ENCODE measurements at regions of chr9 and their contacts with region 1.

Region 1: GRCh38 chr9:14466429-14466818 is 152.5 kb upstream of the NFIB start:
- DNase-seq: no peak
- H3K4me3 ChIP-seq: no peak overlapping the region
- H3K27ac ChIP-seq: no peak overlapping the region
- H3K4me1 ChIP-seq: peaks cover 10% of the 10 kb centered on the region
- H3K27me3 ChIP-seq: no peaks in the 10 kb centered on the region
- CTCF ChIP-seq: no peak
- POLR2A ChIP-seq: no peak

Region 2: DNA sequence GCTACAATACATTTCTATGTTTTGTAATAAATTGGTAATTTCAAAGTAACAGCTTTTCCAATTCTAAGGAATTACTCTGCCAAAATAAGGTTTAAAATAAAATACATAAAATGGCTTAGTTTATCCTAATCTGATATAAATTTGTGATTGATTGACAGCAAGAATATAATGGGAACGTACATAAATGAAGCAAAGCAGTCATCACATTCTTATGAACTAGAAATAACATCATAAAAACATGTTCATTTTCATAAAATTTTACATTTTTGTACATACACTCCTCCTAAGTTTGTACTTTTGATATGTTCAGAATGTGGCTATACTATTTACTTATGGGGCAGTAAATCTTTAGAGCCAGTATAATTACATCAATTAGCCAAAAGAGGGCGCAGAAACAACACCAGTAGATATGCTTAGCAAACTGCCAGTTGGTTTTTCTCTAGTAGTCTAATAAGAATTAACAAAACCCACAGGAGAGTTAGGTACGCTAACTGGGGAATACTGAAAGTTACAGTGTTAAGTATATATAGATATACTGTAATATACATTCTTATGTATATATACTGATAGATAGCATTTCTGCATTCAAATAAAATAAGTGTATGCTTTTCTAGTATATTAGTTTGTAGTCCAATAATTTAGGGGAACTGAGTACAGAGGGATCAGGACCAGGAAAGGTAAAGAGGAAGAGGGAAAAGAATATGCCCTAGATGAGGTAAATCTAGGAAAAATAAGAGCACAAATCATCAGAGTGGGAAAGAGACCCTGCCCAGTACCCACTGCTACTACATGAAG is 150.0 kb after region 1 on chr9:
- CTCF ChIA-PET with region 1: interaction called, 12 read pairs
- POLR2A ChIA-PET with region 1: no interaction called
- dilution Hi-C with region 1: no loop called
- intact Hi-C with region 1: loop called (anchors 1 kb)
- DNase-seq: peak; percentile 68
- H3K4me3 ChIP-seq: no peak overlapping the region
- H3K27ac ChIP-seq: no peak overlapping the region
- H3K4me1 ChIP-seq: no peaks in the 10 kb centered on the region
- H3K27me3 ChIP-seq: no peaks in the 10 kb centered on the region
- CTCF ChIP-seq: peak; percentile 37 to 46
- POLR2A ChIP-seq: no peak

Region 3: GRCh38 chr9:14661421-14662059 is 195.1 kb after region 1 on chr9:
- CTCF ChIA-PET with region 1: interaction called, 37 read pairs
- POLR2A ChIA-PET with region 1: no interaction called
- dilution Hi-C with region 1: no loop called
- intact Hi-C with region 1: no loop called
- DNase-seq: peak; percentile 73
- H3K4me3 ChIP-seq: no peak overlapping the region
- H3K27ac ChIP-seq: no peak overlapping the region
- H3K4me1 ChIP-seq: peaks cover 6% of the 10 kb centered on the region
- H3K27me3 ChIP-seq: no peaks in the 10 kb centered on the region
- CTCF ChIP-seq: peak; percentile 28 to 50
- POLR2A ChIP-seq: no peak

Region 4: DNA sequence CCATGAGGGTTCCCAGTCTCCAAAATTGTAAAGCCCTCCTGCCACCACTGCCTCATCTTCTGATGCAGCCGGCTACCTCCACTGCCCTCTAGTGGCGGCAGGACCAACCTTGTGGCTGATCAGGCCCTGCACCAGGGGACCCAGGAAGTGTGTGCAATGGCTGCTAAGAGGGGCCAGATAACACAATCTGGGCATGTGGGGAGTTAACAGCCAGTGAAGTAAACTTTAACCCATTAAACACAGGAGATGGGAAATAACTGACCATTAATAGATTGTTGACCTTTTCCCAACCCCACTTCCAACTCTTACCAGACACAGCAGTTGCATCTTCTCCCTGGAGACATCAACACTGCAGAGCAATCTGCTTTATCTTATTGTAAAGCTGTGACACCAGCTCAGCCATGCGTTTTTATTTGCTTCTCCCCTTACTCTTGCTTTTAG is 380.5 kb after region 1 on chr9:
- CTCF ChIA-PET with region 1: no interaction called
- POLR2A ChIA-PET with region 1: no interaction called
- dilution Hi-C with region 1: no loop called
- intact Hi-C with region 1: loop called (anchors 1 kb)
- DNase-seq: peak; percentile 28
- H3K4me3 ChIP-seq: no peak overlapping the region
- H3K27ac ChIP-seq: no peak overlapping the region
- H3K4me1 ChIP-seq: no peaks in the 10 kb centered on the region
- H3K27me3 ChIP-seq: peaks cover 6 to 14% of the 10 kb centered on the region in 2 experiments
- CTCF ChIP-seq: peak; percentile 77 to 80
- POLR2A ChIP-seq: no peak